Gastrocnemius medialis (tissue), 4 donors: ENCODE measurements at regions of chr3 and their contacts with region 1.

Region 1: GRCh38 chr3:118884748-118885206 is 149.9 kb downstream of the IGSF11 start:
- DNase-seq: peak; percentile 38 to 59
- ATAC-seq: peak; percentile 71 to 76
- H3K4me3 ChIP-seq: peak overlapping the region in 1 of 4 donors; percentile 22
- H3K27ac ChIP-seq: no peak overlapping the region
- H3K4me1 ChIP-seq: no peaks in the 10 kb centered on the region
- H3K27me3 ChIP-seq: peaks cover 0 to 4% (median 0%) of the 10 kb centered on the region in 3 donors
- CTCF ChIP-seq: peak; percentile 77 to 90 (median 84)
- POLR2A ChIP-seq: no peak

Region 2: GRCh38 chr3:119034256-119035013 is 149.7 kb after region 1 on chr3 and contains the start of gene IGSF11:
- in situ Hi-C with region 1: loop called (anchors 5 to 10 kb)
- intact Hi-C with region 1: loop called (anchors 1 kb)
- DNase-seq: peak; percentile 16 to 71
- ATAC-seq: peak; percentile 92 to 94
- H3K4me3 ChIP-seq: peak within 1 kb of the TSS; percentile 68 to 76 (median 72)
- H3K27ac ChIP-seq: peak within 1 kb of the TSS; percentile 63 to 77 (median 68)
- H3K4me1 ChIP-seq: peaks cover 0 to 5% of the 10 kb centered on the region in 2 donors
- H3K27me3 ChIP-seq: peaks cover 0 to 2% (median 0%) of the 10 kb centered on the region in 3 donors
- CTCF ChIP-seq: peak in 4 of 5 experiments; percentile 77 to 86 (median 82)
- POLR2A ChIP-seq: peak in 1 of 2 donors; percentile 39
- total RNA-seq, gene IGSF11: 4.7 to 11.5 (median 8.6) TPM

Region 3: DNA sequence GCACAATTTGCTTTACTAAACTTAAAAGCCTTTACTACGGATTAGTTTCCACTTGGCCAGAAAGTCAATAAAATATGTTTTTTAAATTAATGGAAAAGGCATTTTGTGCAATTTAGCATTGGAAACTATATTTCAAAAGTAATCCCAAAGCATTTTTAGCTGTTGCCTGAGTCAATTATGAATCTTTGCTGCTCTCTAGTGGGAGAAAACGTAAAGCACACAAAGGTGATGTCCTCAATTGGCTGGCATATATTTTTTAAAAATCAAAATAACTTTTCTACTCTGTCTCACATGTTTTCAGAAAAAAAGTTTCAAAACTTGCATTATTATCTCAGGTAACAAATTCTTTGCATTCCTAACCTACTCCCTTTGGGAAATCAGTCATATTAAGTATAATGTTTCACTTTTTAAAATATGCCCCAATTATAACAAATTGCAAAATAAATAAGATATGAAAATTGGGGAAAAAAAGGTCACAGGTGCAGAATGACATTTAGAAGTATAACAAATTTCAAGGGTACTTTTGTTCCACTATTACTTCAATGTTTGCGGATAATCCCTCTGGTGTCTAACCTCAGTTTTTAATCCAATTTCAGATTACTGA is 213.9 kb after region 1 on chr3:
- in situ Hi-C with region 1: loop called (anchors 5 to 10 kb)
- intact Hi-C with region 1: loop called (anchors 1 kb)
- DNase-seq: no peak
- ATAC-seq: peak in 1 of 2 donors; percentile 55
- H3K4me3 ChIP-seq: no peak overlapping the region
- H3K27ac ChIP-seq: no peak overlapping the region
- H3K4me1 ChIP-seq: no peaks in the 10 kb centered on the region
- H3K27me3 ChIP-seq: no peaks in the 10 kb centered on the region
- CTCF ChIP-seq: peak; percentile 56 to 77 (median 67)
- POLR2A ChIP-seq: no peak

Region 4: GRCh38 chr3:119240591-119241434 is 356.0 kb after region 1 on chr3 and contains the start of gene B4GALT4:
- in situ Hi-C with region 1: loop called in 3 of 4 experiments (anchors 10 to 25 kb)
- intact Hi-C with region 1: loop called (anchors 10 kb)
- DNase-seq: peak; percentile 72 to 74
- ATAC-seq: peak; percentile 89 to 95
- H3K4me3 ChIP-seq: peak within 1 kb of the TSS; percentile 67 to 82 (median 70)
- H3K27ac ChIP-seq: peak within 1 kb of the TSS; percentile 77 to 89 (median 86)
- H3K4me1 ChIP-seq: peaks cover 0 to 22% of the 10 kb centered on the region in 2 donors
- H3K27me3 ChIP-seq: no peaks in the 10 kb centered on the region
- CTCF ChIP-seq: peak in 1 of 5 experiments; percentile 10
- POLR2A ChIP-seq: peak; percentile 71 to 79
- total RNA-seq, gene B4GALT4: 5.7 to 13.4 (median 7.7) TPM

Region 5: GRCh38 chr3:119380697-119381096 is 495.9 kb after region 1 on chr3:
- in situ Hi-C with region 1: loop called in 1 of 4 experiments (anchors 25 kb)
- intact Hi-C with region 1: no loop called
- DNase-seq: no peak
- ATAC-seq: no peak
- H3K4me3 ChIP-seq: no peak overlapping the region
- H3K27ac ChIP-seq: no peak overlapping the region
- H3K4me1 ChIP-seq: no peaks in the 10 kb centered on the region
- H3K27me3 ChIP-seq: no peaks in the 10 kb centered on the region
- CTCF ChIP-seq: no peak
- POLR2A ChIP-seq: no peak